ENCODE measurements at regions of chr7 and their contacts with region 1.

Region 1: DNA sequence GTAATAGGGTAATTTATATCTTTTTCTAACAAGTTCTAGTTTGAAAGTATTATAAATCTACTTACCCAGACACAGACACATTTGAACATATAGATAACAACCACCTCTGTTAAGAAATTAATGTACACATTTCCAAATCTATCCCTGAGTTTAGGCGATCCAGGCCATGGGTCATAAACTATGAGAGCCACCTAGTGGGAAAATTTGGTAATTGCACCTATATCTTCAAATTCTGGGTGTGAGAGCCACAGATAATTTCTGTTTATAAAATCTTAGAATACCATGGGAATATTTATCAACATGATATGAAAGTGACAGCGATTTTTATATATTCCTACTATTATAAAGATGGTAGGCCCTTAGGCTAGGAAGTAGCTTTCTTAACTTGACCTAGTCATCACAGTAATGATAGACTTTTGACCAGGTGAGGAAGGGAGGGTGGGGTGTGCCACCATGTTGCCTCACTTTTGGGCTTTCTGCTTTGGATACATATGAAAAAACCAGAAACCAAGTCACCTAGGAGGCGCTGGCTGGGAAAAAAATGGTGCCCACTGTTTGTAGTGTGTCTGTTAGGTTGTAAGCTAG is 8.0 kb upstream of the EPHA1 start:
- DNase-seq: no peak
- H3K4me3 Mint-ChIP-seq: no peak overlapping the region
- H3K27ac Mint-ChIP-seq: no peak overlapping the region
- H3K4me1 Mint-ChIP-seq: peaks cover 6% of the 10 kb centered on the region
- H3K27me3 Mint-ChIP-seq: no peaks in the 10 kb centered on the region

Region 2: DNA sequence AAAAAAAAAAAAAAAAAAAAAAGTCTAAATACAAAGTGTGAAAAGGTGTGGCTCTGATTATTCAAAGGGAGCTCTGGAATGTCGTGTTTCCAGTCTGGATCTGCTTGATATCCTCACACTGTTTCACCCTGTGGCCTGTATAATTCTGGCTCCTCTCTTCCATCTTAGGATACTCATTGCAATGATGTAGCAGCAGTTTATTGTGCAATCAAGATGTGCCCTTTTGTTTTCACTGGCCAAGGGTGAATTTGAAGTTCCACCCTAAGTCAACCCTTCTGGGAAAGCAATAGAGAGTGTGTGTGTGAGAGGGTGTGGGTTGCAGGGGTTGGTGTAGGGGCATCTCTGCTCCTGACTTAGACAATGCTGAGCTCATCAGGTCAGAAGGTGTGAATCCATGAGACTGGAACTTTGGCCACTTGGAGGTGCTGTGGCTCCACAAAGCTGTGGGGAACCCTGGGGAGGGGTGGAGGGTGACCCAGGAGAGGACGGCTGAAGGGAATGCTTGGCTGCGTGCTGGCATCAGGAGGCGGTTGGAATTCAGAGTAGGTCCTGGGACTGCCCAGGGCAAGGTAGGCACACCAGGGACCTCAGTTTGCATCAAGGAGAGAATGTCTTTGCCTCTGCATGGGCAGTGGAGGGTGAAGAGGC is 1040.9 kb before region 1 on chr7:
- CTCF ChIA-PET with region 1: no interaction called
- POLR2A ChIA-PET with region 1: no interaction called
- intact Hi-C with region 1: no loop called
- DNase-seq: peak; percentile 46
- H3K4me3 Mint-ChIP-seq: peak overlapping the region; percentile 20
- H3K27ac Mint-ChIP-seq: peak overlapping the region; percentile 42
- H3K4me1 Mint-ChIP-seq: no peaks in the 10 kb centered on the region
- H3K27me3 Mint-ChIP-seq: peaks cover 4% of the 10 kb centered on the region

Region 3: GRCh38 chr7:143314127-143314526 is 102.5 kb before region 1 on chr7:
- CTCF ChIA-PET with region 1: interaction called, 3 read pairs
- POLR2A ChIA-PET with region 1: no interaction called
- intact Hi-C with region 1: loop called (anchors 5 kb)
- DNase-seq: no peak
- H3K4me3 Mint-ChIP-seq: no peak overlapping the region
- H3K27ac Mint-ChIP-seq: no peak overlapping the region
- H3K4me1 Mint-ChIP-seq: peaks cover 17% of the 10 kb centered on the region
- H3K27me3 Mint-ChIP-seq: no peaks in the 10 kb centered on the region

Region 4: GRCh38 chr7:143401131-143401664 is 15.5 kb before region 1 on chr7:
- CTCF ChIA-PET with region 1: interaction called, 28 read pairs
- POLR2A ChIA-PET with region 1: no interaction called
- intact Hi-C with region 1: no loop called
- DNase-seq: no peak
- H3K4me3 Mint-ChIP-seq: no peak overlapping the region
- H3K27ac Mint-ChIP-seq: no peak overlapping the region
- H3K4me1 Mint-ChIP-seq: peaks cover 13% of the 10 kb centered on the region
- H3K27me3 Mint-ChIP-seq: no peaks in the 10 kb centered on the region

Region 5: GRCh38 chr7:143884969-143885559 is 468.4 kb after region 1 on chr7:
- CTCF ChIA-PET with region 1: no interaction called
- POLR2A ChIA-PET with region 1: no interaction called
- intact Hi-C with region 1: no loop called
- DNase-seq: peak; percentile 29
- H3K4me3 Mint-ChIP-seq: no peak overlapping the region
- H3K27ac Mint-ChIP-seq: no peak overlapping the region
- H3K4me1 Mint-ChIP-seq: peaks cover 15% of the 10 kb centered on the region
- H3K27me3 Mint-ChIP-seq: peaks cover 25% of the 10 kb centered on the region

Measured in activated CD4-positive, alpha-beta memory T cell treated with anti-CD3 and anti-CD28 coated beads for 36 hours (primary cell).